PC-9 (cell line): ENCODE measurements at regions of chr7 and their contacts with region 1.

Region 1: DNA sequence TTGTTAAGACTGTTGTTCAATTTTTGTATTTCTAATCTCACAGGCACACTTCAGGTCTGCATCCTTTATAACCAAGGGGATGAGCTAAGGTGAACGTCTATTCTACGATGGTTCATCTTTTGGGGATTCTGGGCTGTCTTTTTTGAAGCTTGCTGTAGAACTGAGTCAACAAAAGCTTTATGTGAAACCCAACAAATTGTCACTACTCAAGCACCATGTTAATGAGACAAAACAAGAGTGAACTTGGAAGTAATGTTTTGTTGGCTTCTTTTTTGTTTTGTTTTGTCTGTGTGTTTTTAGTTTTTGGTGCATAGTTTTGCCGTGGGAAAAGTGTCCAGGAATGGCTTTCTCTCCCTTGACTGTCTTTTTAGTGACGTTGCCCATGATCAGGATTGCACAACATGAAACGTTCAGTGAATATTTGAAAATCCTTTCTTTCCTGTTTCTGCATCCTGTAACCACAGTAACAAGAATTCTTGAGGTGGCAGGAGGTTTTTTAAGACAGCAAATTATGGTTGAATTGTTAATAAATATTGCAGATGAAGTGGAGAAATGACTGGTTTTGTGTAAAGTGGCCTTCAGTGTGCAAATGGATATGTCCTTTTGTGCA is 65.6 kb downstream of the WIPF3 start:
- DNase-seq: peak in 1 of 2 experiments; percentile 57
- H3K4me3 ChIP-seq: 0 out of 2 replicates have a peak overlapping the region, but pooled peaks have one; percentile 6
- H3K27ac ChIP-seq: no peak overlapping the region
- H3K4me1 ChIP-seq: peaks cover 6% of the 10 kb centered on the region
- H3K27me3 ChIP-seq: no peaks in the 10 kb centered on the region
- CTCF ChIP-seq: no peak

Region 2: DNA sequence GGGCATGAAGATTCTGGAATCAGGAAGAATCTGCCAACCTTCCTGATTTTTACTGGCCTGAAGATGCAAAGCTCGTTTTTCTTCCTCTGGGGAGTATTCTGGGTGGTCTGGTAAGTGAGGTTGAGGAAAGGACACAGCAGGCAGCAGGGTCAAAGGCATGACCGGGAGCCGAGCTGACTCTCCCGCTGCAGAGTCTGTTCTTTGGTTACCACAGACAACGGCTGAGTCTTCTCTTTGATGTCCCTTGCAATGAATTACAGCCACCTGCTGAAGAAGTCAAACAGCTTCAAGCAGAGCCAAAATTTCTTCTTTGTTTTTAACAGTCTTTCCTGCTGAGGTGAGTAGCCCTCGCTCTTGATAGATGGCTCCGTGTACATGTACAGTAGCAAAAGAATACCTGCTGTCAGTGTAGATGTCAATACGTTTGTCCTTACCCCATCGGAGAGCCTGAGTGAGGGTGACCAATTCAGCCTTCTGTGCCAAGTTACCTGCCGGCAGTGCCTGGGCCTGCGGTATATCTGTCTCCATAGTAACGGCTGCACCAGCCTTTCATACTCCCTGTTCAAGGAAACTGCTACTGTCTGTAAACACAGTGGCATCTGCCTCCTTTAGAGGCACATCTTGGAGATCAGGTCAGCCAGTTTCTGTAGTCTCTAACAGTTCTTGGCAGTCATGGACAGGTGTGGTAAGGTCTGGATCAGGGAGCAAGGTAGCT is 231.9 kb before region 1 on chr7:
- CTCF ChIA-PET with region 1: no interaction called
- POLR2A ChIA-PET with region 1: no interaction called
- intact Hi-C with region 1: loop called (anchors 5 kb)
- DNase-seq: no peak
- H3K4me3 ChIP-seq: no peak overlapping the region
- H3K27ac ChIP-seq: no peak overlapping the region
- H3K4me1 ChIP-seq: peaks cover 14% of the 10 kb centered on the region
- H3K27me3 ChIP-seq: no peaks in the 10 kb centered on the region
- CTCF ChIP-seq: no peak

Region 3: GRCh38 chr7:29797112-29797944 is 74.6 kb before region 1 on chr7:
- CTCF ChIA-PET with region 1: no interaction called
- POLR2A ChIA-PET with region 1: no interaction called
- intact Hi-C with region 1: no loop called
- DNase-seq: peak in 1 of 2 experiments; percentile 21
- H3K4me3 ChIP-seq: no peak overlapping the region
- H3K27ac ChIP-seq: no peak overlapping the region
- H3K4me1 ChIP-seq: no peaks in the 10 kb centered on the region
- H3K27me3 ChIP-seq: 0 out of 2 replicates have a peak, but pooled peaks cover 3% of the 10 kb centered on the region
- CTCF ChIP-seq: no peak